ENCODE measurements at regions of chr19 and their contacts with region 1.

Region 1: GRCh38 chr19:13701624-13702023 is 62.7 kb upstream of the MRI1 start:
- DNase-seq: no peak
- ATAC-seq: no peak
- H3K4me3 ChIP-seq: no peak overlapping the region
- H3K4me3 Mint-ChIP-seq: no peak overlapping the region
- H3K27ac ChIP-seq: no peak overlapping the region
- H3K27ac Mint-ChIP-seq: no peak overlapping the region
- H3K4me1 ChIP-seq: no peaks in the 10 kb centered on the region
- H3K4me1 Mint-ChIP-seq: no peaks in the 10 kb centered on the region
- H3K27me3 ChIP-seq: peaks cover 5 to 21% of the 10 kb centered on the region in 2 experiments
- H3K27me3 Mint-ChIP-seq: peaks cover 24 to 37% of the 10 kb centered on the region in 2 donors

Region 2: GRCh38 chr19:12660980-12661379 is 1040.6 kb before region 1 on chr19:
- CTCF ChIA-PET with region 1: interaction called in 1 of 2 experiments, 13 read pairs
- POLR2A ChIA-PET with region 1: no interaction called
- DNase-seq: no peak
- ATAC-seq: no peak
- H3K4me3 ChIP-seq: no peak overlapping the region
- H3K4me3 Mint-ChIP-seq: no peak overlapping the region
- H3K27ac ChIP-seq: no peak overlapping the region
- H3K27ac Mint-ChIP-seq: no peak overlapping the region
- H3K4me1 ChIP-seq: peaks cover 12 to 24% of the 10 kb centered on the region in 2 experiments
- H3K4me1 Mint-ChIP-seq: peaks cover 15 to 28% (median 20%) of the 10 kb centered on the region in 3 donors
- H3K27me3 ChIP-seq: no peaks in the 10 kb centered on the region
- H3K27me3 Mint-ChIP-seq: no peaks in the 10 kb centered on the region

Region 3: GRCh38 chr19:13717194-13717643 is 15.6 kb after region 1 on chr19:
- CTCF ChIA-PET with region 1: no interaction called
- POLR2A ChIA-PET with region 1: no interaction called
- DNase-seq: no peak
- ATAC-seq: no peak
- H3K4me3 ChIP-seq: no peak overlapping the region
- H3K4me3 Mint-ChIP-seq: no peak overlapping the region
- H3K27ac ChIP-seq: no peak overlapping the region
- H3K27ac Mint-ChIP-seq: no peak overlapping the region
- H3K4me1 ChIP-seq: no peaks in the 10 kb centered on the region
- H3K4me1 Mint-ChIP-seq: no peaks in the 10 kb centered on the region
- H3K27me3 ChIP-seq: peaks cover 0 to 22% of the 10 kb centered on the region in 2 experiments
- H3K27me3 Mint-ChIP-seq: peaks cover 15 to 20% of the 10 kb centered on the region in 2 donors

Measured in T-cell (primary cell).